Left ventricle myocardium inferior (tissue), 1 donor: ENCODE measurements at regions of chr4 and their contacts with region 1.

Region 1: DNA sequence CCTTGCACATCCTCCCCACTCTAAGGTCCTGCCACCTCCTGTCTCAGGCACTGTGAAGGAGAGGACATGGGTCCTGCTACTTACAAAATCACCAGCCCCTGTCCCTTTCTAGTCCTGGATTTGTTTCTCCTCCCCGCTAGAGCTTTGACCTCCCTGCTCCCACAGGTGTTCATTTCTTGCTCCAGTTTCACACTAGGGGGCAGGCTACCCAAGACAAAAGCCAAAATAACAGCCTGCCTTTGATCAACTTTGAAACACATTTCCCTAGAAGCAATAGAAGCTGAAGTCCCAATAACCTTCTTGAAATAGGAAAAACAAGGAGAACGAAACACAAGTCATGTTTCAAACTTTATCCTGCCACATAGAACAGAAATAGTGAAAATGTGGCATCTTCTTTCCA is 164.4 kb downstream of the QDPR start:
- DNase-seq: no peak
- H3K4me3 ChIP-seq: no peak overlapping the region
- H3K27ac ChIP-seq: no peak overlapping the region
- H3K4me1 ChIP-seq: no peaks in the 10 kb centered on the region
- H3K27me3 ChIP-seq: no peaks in the 10 kb centered on the region
- CTCF ChIP-seq: peak; percentile 62

Region 2: DNA sequence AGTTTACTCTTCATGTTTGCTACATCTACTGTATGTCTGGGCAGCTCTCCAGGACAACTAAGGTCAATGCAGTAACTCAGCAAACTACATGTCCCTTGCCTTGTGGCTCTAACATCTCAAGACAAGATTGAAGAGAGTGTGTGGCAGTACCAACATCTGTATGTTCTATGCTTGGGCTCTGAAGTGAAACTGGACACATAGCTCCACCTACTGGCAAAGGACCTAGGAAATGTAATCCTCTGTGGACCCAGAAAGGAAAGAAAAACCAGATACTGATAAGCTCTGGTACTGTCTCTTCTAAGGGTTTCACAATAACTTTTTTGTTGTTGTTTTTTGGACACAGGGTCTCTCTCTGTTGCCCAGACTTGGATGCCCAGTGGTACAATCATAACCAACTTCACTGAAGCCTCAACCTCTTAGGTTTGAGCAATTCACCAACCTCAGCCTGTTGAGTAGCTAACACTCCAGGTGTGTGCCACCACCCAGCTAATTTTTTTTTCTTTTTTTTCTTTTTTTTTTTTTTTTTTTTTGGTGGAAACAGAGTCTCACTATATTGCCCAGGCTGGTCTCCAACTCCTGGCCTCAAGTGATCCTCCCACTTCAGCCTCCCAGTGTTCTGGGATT is 100.3 kb after region 1 on chr4:
- intact Hi-C with region 1: loop called (anchors 10 kb)
- DNase-seq: no peak
- H3K4me3 ChIP-seq: no peak overlapping the region
- H3K27ac ChIP-seq: peak overlapping the region; percentile 48
- H3K4me1 ChIP-seq: peaks cover 7% of the 10 kb centered on the region
- H3K27me3 ChIP-seq: no peaks in the 10 kb centered on the region
- CTCF ChIP-seq: peak; percentile 75

Region 3: DNA sequence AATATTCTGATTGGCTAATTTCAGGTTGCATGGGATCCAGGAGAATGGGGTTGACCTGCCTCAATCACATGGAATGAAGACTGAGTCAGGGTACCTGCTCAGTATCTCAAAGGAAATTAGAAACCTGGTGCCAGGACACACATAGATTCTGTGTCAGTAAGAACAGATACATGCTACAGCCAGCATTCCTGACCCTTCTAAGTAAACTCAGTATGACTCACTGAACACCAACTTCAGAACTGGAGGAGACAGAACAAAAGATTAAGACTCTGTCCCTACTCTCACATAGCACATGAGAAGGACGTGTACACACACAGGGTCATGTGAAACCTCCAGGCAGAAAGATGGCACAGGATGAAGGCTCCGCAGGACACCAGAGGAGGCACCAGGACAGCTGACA is 379.5 kb after region 1 on chr4:
- intact Hi-C with region 1: no loop called
- DNase-seq: no peak
- H3K4me3 ChIP-seq: no peak overlapping the region
- H3K27ac ChIP-seq: no peak overlapping the region
- H3K4me1 ChIP-seq: no peaks in the 10 kb centered on the region
- H3K27me3 ChIP-seq: no peaks in the 10 kb centered on the region
- CTCF ChIP-seq: no peak